Thyroid gland (tissue), 4 donors: ENCODE measurements at regions of chr2 and their contacts with region 1.

Region 1: DNA sequence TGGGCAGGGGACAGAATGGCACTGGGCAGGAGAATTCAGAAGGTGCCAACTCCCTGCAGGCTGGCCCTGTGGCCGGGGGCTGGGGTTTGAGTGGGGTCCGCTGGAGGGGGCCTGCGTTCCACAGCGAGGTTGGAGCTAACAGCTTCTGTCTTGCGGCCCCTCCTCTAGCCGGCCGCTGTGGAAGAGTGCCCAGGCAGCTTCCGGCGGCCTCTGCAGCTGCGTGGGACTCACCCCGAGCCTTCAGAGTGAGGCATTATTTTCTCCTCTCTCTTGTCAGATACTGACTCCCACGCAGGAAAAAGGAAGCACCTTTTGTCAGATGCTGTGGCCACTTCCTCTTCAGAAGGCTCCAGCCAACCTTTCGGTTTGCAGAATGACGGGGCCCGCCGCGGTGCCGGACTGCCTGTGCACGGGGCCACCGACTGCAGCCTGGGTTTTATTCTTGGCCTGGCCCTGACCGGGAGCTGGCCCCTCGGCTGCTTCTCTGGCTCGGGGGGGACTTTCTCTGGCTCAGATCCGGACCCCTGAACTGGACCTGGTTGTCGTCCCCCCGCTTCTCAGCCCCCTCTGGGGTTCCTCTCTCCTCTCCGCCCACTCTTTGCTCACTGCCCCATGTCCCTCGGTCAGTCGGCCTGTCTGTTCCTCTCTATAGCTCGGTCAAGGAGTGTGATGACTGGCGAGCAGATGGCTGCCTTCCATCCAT is 40.1 kb downstream of the ARHGAP25 start:
- DNase-seq: peak; percentile 22 to 37
- H3K4me3 ChIP-seq: peak overlapping the region in 1 of 3 donors; percentile 7
- H3K27ac ChIP-seq: peak overlapping the region; percentile 53 to 77 (median 63)
- H3K4me1 ChIP-seq: peaks cover 10 to 21% of the 10 kb centered on the region in 2 donors
- H3K27me3 ChIP-seq: no peaks in the 10 kb centered on the region
- CTCF ChIP-seq: no peak
- POLR2A ChIP-seq: peak in 1 of 2 donors; percentile 37

Region 2: DNA sequence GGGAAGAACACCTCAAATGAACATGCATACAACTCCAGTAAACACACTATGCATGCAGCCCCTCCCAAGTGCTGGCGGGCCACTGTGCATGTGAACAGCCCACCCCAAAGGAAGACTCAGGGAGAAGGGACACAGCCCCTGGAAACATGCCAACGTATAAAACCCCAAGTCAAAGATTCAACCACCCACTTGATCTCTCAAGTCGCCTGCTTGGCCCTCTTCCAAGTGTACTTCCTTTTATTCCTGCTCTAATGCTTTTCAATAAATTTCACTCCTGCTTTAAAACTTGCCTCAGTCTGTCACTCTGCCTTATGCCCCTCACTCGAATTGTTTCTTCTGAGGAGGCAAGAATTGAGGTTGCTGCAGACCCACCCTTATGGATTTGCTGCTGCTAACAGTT is 851.0 kb before region 1 on chr2:
- intact Hi-C with region 1: no loop called
- DNase-seq: peak; percentile 44 to 47
- H3K4me3 ChIP-seq: no peak overlapping the region
- H3K27ac ChIP-seq: no peak overlapping the region
- H3K4me1 ChIP-seq: peaks cover 3 to 10% of the 10 kb centered on the region in 2 donors
- H3K27me3 ChIP-seq: no peaks in the 10 kb centered on the region
- CTCF ChIP-seq: no peak
- POLR2A ChIP-seq: no peak

Region 3: GRCh38 chr2:68828887-68829708 is 54.4 kb after region 1 on chr2:
- intact Hi-C with region 1: loop called (anchors 5 kb)
- DNase-seq: peak; percentile 99
- H3K4me3 ChIP-seq: no peak overlapping the region
- H3K27ac ChIP-seq: peak overlapping the region; percentile 72 to 86 (median 85)
- H3K4me1 ChIP-seq: peaks cover 14 to 50% of the 10 kb centered on the region in 2 donors
- H3K27me3 ChIP-seq: no peaks in the 10 kb centered on the region
- CTCF ChIP-seq: peak in 2 of 6 experiments; percentile 8 to 15
- POLR2A ChIP-seq: no peak